Prostate gland (tissue), 2 donors: ENCODE measurements at regions of chr2 and their contacts with region 1.

Region 1: DNA sequence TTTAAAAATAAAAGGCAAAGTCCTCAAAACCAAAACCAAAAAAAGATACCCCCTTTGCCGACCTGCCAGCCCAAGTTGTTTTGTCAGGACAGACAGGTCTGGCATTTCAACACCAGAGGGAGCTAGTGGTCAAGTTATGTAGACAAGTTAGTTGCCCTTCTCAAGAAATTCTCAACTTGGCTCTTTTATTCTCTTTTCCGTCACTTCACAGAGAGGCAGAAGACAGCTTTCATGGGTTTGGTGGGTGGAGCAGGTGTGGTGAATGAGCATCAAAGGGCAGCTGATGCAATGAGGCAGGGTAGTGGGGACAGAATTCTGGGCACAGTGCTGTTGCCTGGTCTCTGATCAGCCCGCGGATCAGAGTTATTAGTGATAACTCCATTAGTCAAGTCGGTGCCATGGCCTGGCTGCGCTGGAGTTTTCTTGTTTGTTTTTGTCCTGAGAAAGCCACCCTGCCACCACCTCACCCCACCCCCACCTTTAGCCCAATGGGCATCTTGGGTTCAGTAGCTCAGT is 303.7 kb upstream of the EPAS1 start:
- DNase-seq: peak; percentile 75
- H3K4me3 ChIP-seq: no peak overlapping the region
- H3K27ac ChIP-seq: no peak overlapping the region
- H3K4me1 ChIP-seq: peaks cover 10% of the 10 kb centered on the region
- H3K27me3 ChIP-seq: no peaks in the 10 kb centered on the region
- CTCF ChIP-seq: peak; percentile 52 to 80 (median 78)
- POLR2A ChIP-seq: no peak

Region 2: GRCh38 chr2:46461011-46461674 is 467.6 kb after region 1 on chr2:
- intact Hi-C with region 1: loop called (anchors 1 kb)
- DNase-seq: peak; percentile 64
- H3K4me3 ChIP-seq: no peak overlapping the region
- H3K27ac ChIP-seq: peak overlapping the region in 1 of 2 donors; percentile 7
- H3K4me1 ChIP-seq: no peaks in the 10 kb centered on the region
- H3K27me3 ChIP-seq: no peaks in the 10 kb centered on the region
- CTCF ChIP-seq: peak; percentile 99
- POLR2A ChIP-seq: no peak